ENCODE measurements at regions of chr5 and their contacts with region 1.

Region 1: GRCh38 chr5:59790399-59791125 is 103.0 kb downstream of the PDE4D start:
- DNase-seq: no peak
- H3K4me3 ChIP-seq: no peak overlapping the region
- H3K27ac ChIP-seq: no peak overlapping the region
- H3K4me1 ChIP-seq: peaks cover 46% of the 10 kb centered on the region
- H3K27me3 ChIP-seq: no peaks in the 10 kb centered on the region
- CTCF ChIP-seq: no peak

Region 2: DNA sequence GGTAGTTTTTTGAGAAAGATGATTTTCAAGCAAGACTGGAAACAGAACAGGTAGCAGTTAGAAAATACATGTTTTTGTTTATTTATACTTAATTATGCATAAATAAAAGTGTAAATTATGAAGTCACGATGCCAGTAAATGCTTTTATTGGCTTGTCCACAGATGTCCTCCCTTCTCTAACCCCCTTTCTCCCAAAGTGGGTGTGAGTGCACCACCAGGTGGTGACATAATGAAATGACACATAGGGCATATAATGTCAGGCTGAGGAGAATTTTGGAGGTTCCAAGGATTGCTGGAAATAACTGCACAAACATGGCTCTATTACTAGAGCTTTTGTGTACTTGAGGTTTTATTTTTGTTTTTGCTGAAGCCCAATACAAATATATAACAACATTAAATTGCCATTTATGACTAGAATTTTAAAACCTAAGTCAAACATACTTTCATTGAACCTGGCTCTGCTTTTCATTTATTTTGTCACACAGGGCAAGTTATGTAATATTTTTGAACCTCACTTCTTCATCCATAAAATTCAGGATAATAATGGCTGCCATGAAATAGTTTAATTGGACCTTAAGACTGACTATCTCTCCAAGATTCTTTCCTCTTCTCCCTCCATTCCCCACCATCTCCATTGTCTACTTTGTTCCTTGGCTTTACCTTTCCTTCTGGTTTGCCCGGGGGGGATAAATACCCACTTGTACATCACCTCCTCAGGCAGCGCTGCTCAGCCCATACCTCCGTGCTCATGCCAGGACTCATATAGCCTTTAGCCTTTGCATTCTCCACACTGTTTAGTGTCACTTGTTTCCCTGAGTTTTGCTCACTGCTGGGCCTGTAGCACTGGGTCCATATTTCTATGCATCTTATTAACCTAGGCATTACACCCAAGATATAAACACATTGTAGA is 65.8 kb before region 1 on chr5:
- CTCF ChIA-PET with region 1: no interaction called
- dilution Hi-C with region 1: no loop called
- in situ Hi-C with region 1: no loop called
- intact Hi-C with region 1: loop called (anchors 2 kb)
- DNase-seq: peak; percentile 35
- H3K4me3 ChIP-seq: no peak overlapping the region
- H3K27ac ChIP-seq: no peak overlapping the region
- H3K4me1 ChIP-seq: peaks cover 19% of the 10 kb centered on the region
- H3K27me3 ChIP-seq: no peaks in the 10 kb centered on the region
- CTCF ChIP-seq: peak; percentile 79 to 80

Region 3: GRCh38 chr5:59759600-59760351 is 30.8 kb before region 1 on chr5:
- CTCF ChIA-PET with region 1: interaction called, 3 read pairs
- dilution Hi-C with region 1: no loop called
- in situ Hi-C with region 1: no loop called
- intact Hi-C with region 1: loop called (anchors 5 kb)
- DNase-seq: no peak
- H3K4me3 ChIP-seq: no peak overlapping the region
- H3K27ac ChIP-seq: peak overlapping the region; percentile 98
- H3K4me1 ChIP-seq: peaks cover 39% of the 10 kb centered on the region
- H3K27me3 ChIP-seq: no peaks in the 10 kb centered on the region
- CTCF ChIP-seq: no peak

Region 4: DNA sequence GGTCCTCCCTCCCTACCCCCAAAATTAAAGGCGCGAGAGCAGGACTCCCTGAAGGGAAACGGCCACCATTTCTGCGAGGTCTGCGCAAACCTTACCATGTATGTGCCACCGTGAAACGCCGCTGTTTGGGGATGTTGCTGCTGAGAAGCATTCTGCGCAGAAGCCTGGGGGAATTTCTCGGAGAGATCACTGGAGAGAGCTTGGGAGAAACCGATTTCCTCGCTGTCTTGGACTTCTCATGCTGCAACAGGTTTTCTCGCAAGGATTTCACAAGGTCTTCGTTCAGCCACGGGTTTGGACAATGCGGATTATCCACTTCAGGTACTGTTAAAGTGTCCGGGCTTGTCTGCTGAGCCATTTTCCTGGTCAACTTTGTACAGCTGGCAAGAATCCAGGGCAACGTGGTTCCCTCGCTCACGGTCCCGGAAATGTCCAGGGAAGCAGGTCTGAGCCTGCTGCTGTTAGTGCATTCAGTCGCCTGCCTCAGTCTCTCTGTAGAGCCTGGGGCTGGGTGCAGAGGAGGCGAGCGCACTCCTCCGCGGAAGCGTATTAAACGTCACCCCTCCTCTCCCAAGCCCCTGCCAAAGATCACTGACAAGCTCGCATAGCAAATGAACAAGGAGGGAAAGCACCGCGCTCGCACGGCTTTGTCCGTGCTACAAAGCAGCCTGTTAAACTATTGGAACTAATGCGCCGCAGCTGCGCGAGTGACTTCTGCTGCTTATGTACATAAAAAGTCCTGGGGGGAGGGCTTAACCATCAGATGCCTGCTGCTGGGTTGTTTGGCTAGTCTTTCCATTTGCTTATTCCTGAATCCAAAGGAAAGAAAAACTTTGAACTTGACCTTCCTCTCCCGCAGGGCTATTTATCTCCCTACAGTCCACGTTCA is 22.2 kb before region 1 on chr5:
- CTCF ChIA-PET with region 1: interaction called, 3 read pairs
- dilution Hi-C with region 1: no loop called
- in situ Hi-C with region 1: no loop called
- intact Hi-C with region 1: loop called (anchors 1 kb)
- DNase-seq: peak; percentile 81
- H3K4me3 ChIP-seq: peak overlapping the region; percentile 64 to 75 (median 72)
- H3K27ac ChIP-seq: peak overlapping the region; percentile 97
- H3K4me1 ChIP-seq: peaks cover 35% of the 10 kb centered on the region
- H3K27me3 ChIP-seq: no peaks in the 10 kb centered on the region
- CTCF ChIP-seq: no peak

Region 5: DNA sequence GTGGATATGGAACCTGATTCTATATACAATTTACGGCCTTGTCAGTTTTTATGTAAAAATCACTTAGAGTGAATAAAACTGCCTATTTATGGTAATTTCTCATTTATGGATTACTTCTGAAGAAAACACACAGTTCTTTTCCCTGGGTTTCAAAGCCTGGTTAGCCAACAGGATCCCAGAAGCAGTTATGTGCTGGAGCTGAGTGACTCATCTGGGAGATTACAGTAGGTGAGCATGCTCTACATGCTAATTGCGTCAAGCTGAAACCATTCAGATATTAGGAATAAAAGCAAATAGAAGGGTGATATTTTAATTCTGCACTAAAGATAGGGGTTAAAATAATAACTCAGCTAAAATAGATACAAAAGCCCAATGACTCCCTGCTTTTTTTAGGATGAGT is 55.2 kb after region 1 on chr5:
- CTCF ChIA-PET with region 1: no interaction called
- dilution Hi-C with region 1: no loop called
- in situ Hi-C with region 1: no loop called
- intact Hi-C with region 1: no loop called
- DNase-seq: peak; percentile 4
- H3K4me3 ChIP-seq: no peak overlapping the region
- H3K27ac ChIP-seq: no peak overlapping the region
- H3K4me1 ChIP-seq: no peaks in the 10 kb centered on the region
- H3K27me3 ChIP-seq: no peaks in the 10 kb centered on the region
- CTCF ChIP-seq: no peak

Region 6: GRCh38 chr5:59873113-59873512 is 82.6 kb after region 1 on chr5:
- CTCF ChIA-PET with region 1: interaction called, 20 read pairs
- dilution Hi-C with region 1: no loop called
- in situ Hi-C with region 1: no loop called
- intact Hi-C with region 1: no loop called
- DNase-seq: no peak
- H3K4me3 ChIP-seq: no peak overlapping the region
- H3K27ac ChIP-seq: no peak overlapping the region
- H3K4me1 ChIP-seq: no peaks in the 10 kb centered on the region
- H3K27me3 ChIP-seq: no peaks in the 10 kb centered on the region
- CTCF ChIP-seq: no peak

Region 7: DNA sequence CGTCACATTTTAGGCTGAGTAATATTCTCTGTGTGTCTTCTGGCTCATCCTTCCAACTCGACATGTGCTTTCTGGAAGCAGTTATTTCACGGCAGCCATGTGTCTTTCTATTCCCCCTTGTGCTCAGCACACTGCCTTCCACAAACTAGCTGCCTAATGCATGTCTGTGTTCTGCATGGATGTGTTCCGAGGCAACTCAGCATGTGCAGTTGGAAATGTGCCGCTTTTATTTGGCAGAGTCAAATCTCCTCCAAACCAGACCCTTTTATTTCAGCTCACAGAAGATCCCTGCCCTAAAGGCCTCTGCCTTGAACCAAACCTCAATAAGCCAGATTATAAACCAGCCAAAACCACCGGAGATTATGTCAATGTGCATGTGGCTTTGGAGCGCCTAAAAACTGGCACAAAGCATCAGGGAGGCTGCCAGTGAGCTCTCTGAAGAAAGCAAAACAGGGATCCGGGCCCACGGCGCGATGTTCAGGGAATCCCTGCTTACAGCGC is 549.2 kb after region 1 on chr5:
- CTCF ChIA-PET with region 1: interaction called, 16 read pairs
- dilution Hi-C with region 1: no loop called
- in situ Hi-C with region 1: no loop called
- intact Hi-C with region 1: no loop called
- DNase-seq: no peak
- H3K4me3 ChIP-seq: no peak overlapping the region
- H3K27ac ChIP-seq: no peak overlapping the region
- H3K4me1 ChIP-seq: peaks cover 8% of the 10 kb centered on the region
- H3K27me3 ChIP-seq: no peaks in the 10 kb centered on the region
- CTCF ChIP-seq: no peak